ENCODE measurements at regions of chr4 and their contacts with region 1.

Region 1: DNA sequence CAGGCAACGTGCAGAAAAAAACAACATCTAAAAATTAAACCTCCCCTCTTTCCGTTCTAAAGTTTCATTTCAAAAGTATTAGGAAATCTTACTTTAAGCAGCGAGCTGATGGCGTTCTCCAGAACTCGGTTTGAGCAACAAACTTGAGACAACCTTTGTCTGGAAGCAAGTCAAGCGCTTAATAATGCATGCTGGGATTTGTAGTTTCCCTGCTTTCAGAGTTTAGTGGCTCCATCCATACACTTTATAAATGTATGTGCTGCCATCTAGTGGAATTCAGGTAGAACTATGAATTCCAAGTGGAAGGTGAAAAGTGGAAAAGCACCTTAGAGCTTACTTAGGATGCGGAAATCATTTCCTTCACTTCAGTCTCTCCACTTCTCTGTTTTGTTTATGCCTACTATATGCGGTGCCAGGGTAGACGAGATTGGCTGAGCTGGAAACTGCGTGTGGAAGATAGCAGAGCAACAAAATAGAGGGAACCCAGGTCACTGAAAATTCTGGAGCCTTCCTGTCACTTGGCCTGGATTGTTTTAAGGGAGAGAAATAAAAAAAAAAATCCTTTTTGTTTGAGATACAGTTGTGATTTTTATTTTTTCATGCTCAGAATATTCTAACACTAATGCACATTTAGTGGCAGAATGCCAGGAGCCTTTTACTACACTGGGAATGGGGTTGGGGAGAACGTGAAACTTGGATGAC is at the start of gene BDH2:
- DNase-seq: peak in 1 of 2 donors; percentile 59
- ATAC-seq: peak; percentile 92 to 99 (median 96)
- H3K4me3 ChIP-seq: peak within 1 kb of the TSS; percentile 75
- H3K27ac ChIP-seq: peak within 1 kb of the TSS; percentile 71
- H3K4me1 ChIP-seq: peaks cover 15% of the 10 kb centered on the region
- H3K27me3 ChIP-seq: no peaks in the 10 kb centered on the region
- CTCF ChIP-seq: peak; percentile 84
- total RNA-seq, gene BDH2: 11.6 to 16.5 (median 14.3) TPM

Region 2: GRCh38 chr4:102430461-102430910 is 669.4 kb before region 1 on chr4:
- intact Hi-C with region 1: loop called in 1 of 2 experiments (anchors 5 kb)
- DNase-seq: no peak
- ATAC-seq: no peak
- H3K4me3 ChIP-seq: peak overlapping the region; percentile 70
- H3K27ac ChIP-seq: peak overlapping the region; percentile 58
- H3K4me1 ChIP-seq: no peaks in the 10 kb centered on the region
- H3K27me3 ChIP-seq: no peaks in the 10 kb centered on the region
- CTCF ChIP-seq: no peak

Region 3: DNA sequence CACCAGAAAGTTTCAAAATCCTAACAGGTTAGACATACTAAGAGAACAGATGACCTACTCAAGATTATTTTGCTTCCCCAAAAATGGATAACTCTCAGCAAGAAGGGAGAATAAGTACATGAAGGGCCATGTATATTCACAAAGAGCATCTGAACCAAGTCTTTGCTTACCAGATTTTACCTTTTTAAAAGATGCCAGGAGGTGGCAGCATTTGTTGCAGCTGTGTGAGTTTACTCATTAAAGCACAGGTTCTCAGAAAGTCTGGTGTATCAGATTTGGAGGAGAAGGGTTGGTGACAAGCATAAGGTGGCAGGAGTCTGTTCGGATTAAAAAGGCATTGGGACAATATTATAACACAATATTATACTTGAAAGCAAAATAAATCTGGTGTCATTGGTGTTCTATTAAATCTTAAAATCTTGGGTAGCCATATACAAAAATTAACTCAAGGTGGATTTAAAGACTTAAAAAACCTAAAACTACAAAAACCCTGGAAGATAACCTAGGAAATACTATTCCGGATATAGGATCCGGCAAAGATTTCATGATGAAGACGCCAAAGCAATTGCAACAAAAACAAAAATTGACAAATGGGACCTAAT is 650.0 kb before region 1 on chr4:
- intact Hi-C with region 1: loop called (anchors 5 kb)
- DNase-seq: no peak
- ATAC-seq: peak; percentile 64 to 86 (median 70)
- H3K4me3 ChIP-seq: no peak overlapping the region
- H3K27ac ChIP-seq: no peak overlapping the region
- H3K4me1 ChIP-seq: no peaks in the 10 kb centered on the region
- H3K27me3 ChIP-seq: no peaks in the 10 kb centered on the region
- CTCF ChIP-seq: peak; percentile 66

Region 4: GRCh38 chr4:102500696-102501446 is 599.0 kb before region 1 on chr4 and contains the start of gene NFKB1:
- intact Hi-C with region 1: loop called in 1 of 2 experiments (anchors 10 kb)
- DNase-seq: peak; percentile 63 to 84
- ATAC-seq: peak; percentile 70 to 74 (median 72)
- H3K4me3 ChIP-seq: peak within 1 kb of the TSS; percentile 84
- H3K27ac ChIP-seq: peak within 1 kb of the TSS; percentile 98
- H3K4me1 ChIP-seq: peaks cover 38% of the 10 kb centered on the region
- H3K27me3 ChIP-seq: no peaks in the 10 kb centered on the region
- CTCF ChIP-seq: no peak
- total RNA-seq, gene NFKB1: 19.8 to 47.5 (median 22.5) TPM

Region 5: DNA sequence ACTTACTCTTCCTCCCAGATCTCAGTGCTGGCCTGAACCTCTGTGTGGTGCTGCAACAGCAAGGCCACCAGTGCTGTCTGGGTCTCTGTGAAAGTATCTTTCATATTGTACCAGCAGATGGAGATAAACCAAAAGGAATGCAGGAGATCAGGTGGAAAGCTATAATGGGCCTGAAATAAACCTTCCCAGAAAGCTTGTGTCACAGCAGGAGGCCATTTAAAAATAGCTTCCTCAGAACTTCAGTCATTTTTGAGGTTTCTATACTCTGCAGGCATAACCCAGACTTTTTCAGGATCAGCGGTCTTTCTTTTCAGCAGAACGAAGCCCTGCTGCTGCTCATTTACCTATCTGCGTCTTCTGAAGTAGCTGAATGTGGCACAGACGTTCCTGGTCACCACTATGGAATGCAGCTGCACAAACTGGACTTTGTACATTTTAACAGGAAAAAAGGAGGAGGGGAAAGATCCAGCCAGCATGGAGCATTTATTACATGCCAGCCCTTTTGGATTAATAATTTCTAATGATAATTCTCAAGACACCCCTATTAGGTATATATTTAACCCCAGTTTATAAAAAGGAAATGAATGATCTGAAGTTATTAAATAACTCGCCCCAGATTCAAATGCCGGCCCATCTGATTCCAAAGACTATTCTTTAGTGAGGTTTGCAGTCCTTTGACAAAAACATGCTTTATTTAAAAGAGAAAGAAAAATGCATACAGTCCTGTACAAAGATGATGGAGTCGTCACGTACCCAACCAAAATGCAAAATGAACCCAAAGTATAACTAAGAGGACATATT is 478.9 kb before region 1 on chr4:
- intact Hi-C with region 1: loop called (anchors 5 kb)
- DNase-seq: no peak
- ATAC-seq: peak; percentile 92 to 96 (median 93)
- H3K4me3 ChIP-seq: peak overlapping the region; percentile 16
- H3K27ac ChIP-seq: no peak overlapping the region
- H3K4me1 ChIP-seq: peaks cover 8% of the 10 kb centered on the region
- H3K27me3 ChIP-seq: no peaks in the 10 kb centered on the region
- CTCF ChIP-seq: peak; percentile 62

Region 6: GRCh38 chr4:102868781-102869568 is 230.9 kb before region 1 on chr4 and contains the start of gene CISD2:
- intact Hi-C with region 1: loop called in 1 of 2 experiments (anchors 10 kb)
- DNase-seq: peak; percentile 92 to 95
- ATAC-seq: peak; percentile 97 to 98 (median 98)
- H3K4me3 ChIP-seq: peak within 1 kb of the TSS; percentile 82
- H3K27ac ChIP-seq: peak within 1 kb of the TSS; percentile 91
- H3K4me1 ChIP-seq: peaks cover 20% of the 10 kb centered on the region
- H3K27me3 ChIP-seq: no peaks in the 10 kb centered on the region
- CTCF ChIP-seq: no peak
- total RNA-seq, gene CISD2: 6.2 to 13.0 (median 9.1) TPM

Region 7: DNA sequence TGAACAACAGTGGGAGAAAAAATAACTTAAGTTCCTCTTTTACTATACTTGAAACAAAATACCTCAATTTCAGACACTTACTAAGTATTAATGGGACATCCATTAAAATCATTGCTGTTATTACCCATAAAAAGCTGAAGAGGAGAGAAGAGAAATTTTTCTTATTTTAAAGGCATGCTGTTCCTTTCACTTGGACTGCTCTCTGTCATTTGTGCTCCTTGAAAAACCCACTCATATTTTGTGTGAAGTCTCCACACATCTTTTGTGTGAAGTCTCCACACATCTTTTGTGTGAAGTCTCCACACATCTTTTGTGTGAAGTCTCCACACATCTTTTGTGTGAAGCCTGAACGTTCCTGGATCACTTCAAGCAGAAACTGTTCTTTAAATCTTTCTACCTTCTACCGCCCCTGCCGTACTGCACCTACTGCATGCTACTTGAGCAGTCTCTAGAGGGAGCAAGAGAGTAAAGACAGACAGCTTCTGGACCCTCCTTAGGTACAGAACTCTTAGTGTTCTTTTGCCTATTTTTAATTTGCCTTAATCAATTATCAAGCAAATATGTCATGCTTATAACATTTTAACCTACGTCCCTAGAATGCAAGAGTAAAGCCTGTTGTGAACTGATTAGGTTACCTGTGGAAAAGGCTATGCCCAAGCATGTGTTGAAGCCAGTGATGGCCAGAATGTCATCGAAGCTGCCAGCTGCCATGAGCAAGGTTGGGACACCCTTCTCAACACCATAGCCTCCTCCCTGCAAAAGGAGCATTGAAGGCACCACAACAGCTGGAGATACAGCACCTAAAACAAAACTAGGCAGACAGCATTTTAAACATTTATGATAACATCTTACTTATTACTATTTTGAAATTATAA is 53.2 kb before region 1 on chr4:
- intact Hi-C with region 1: loop called (anchors 5 to 10 kb)
- DNase-seq: no peak
- ATAC-seq: peak; percentile 55 to 83 (median 78)
- H3K4me3 ChIP-seq: no peak overlapping the region
- H3K27ac ChIP-seq: no peak overlapping the region
- H3K4me1 ChIP-seq: no peaks in the 10 kb centered on the region
- H3K27me3 ChIP-seq: no peaks in the 10 kb centered on the region
- CTCF ChIP-seq: peak; percentile 62

Region 8: GRCh38 chr4:103289186-103289585 is 189.3 kb after region 1 on chr4:
- intact Hi-C with region 1: no loop called
- DNase-seq: no peak
- ATAC-seq: no peak
- H3K4me3 ChIP-seq: no peak overlapping the region
- H3K27ac ChIP-seq: no peak overlapping the region
- H3K4me1 ChIP-seq: no peaks in the 10 kb centered on the region
- H3K27me3 ChIP-seq: peaks cover 0 to 2% (median 0%) of the 10 kb centered on the region in 3 donors
- CTCF ChIP-seq: no peak

Measured in psoas muscle (tissue), 8 donors.